Esophagus muscularis mucosa (tissue), 4 donors: ENCODE measurements at regions of chr3 and their contacts with region 1.

Region 1: GRCh38 chr3:50572158-50572557 is 2.8 kb downstream of the HEMK1 start:
- DNase-seq: no peak
- H3K4me3 ChIP-seq: no peak overlapping the region
- H3K27ac ChIP-seq: peak overlapping the region in 1 of 4 donors; percentile 64
- H3K4me1 ChIP-seq: peaks cover 16 to 45% (median 39%) of the 10 kb centered on the region in 4 donors
- H3K27me3 ChIP-seq: no peaks in the 10 kb centered on the region
- CTCF ChIP-seq: peak; percentile 92 to 95 (median 93)
- EP300 ChIP-seq: no peak
- POLR2A ChIP-seq: no peak

Region 2: GRCh38 chr3:50550079-50550741 is 21.9 kb before region 1 on chr3:
- intact Hi-C with region 1: no loop called
- DNase-seq: no peak
- H3K4me3 ChIP-seq: no peak overlapping the region
- H3K27ac ChIP-seq: no peak overlapping the region
- H3K4me1 ChIP-seq: no peaks in the 10 kb centered on the region
- H3K27me3 ChIP-seq: peaks cover 0 to 5% (median 0%) of the 10 kb centered on the region in 4 donors
- CTCF ChIP-seq: peak; percentile 66 to 87 (median 69)
- EP300 ChIP-seq: no peak
- POLR2A ChIP-seq: no peak

Region 3: GRCh38 chr3:51379301-51379700 is 807.1 kb after region 1 on chr3:
- intact Hi-C with region 1: loop called (anchors 5 kb)
- DNase-seq: no peak
- H3K4me3 ChIP-seq: no peak overlapping the region
- H3K27ac ChIP-seq: no peak overlapping the region
- H3K4me1 ChIP-seq: peaks cover 5 to 12% (median 10%) of the 10 kb centered on the region in 4 donors
- H3K27me3 ChIP-seq: no peaks in the 10 kb centered on the region
- CTCF ChIP-seq: no peak
- EP300 ChIP-seq: no peak
- POLR2A ChIP-seq: no peak